Caco-2 (cell line): ENCODE measurements at regions of chr2 and their contacts with region 1.

Region 1: GRCh38 chr2:140416577-140416976 is 1636.4 kb upstream of the NXPH2 start:
- DNase-seq: no peak
- H3K4me3 ChIP-seq: no peak overlapping the region
- H3K4me3 Mint-ChIP-seq: no peak overlapping the region
- H3K27ac Mint-ChIP-seq: no peak overlapping the region
- H3K4me1 ChIP-seq: peaks cover 22% of the 10 kb centered on the region
- H3K4me1 Mint-ChIP-seq: peaks cover 9% of the 10 kb centered on the region
- H3K27me3 ChIP-seq: no peaks in the 10 kb centered on the region
- H3K27me3 Mint-ChIP-seq: no peaks in the 10 kb centered on the region
- CTCF ChIP-seq: no peak

Region 2: DNA sequence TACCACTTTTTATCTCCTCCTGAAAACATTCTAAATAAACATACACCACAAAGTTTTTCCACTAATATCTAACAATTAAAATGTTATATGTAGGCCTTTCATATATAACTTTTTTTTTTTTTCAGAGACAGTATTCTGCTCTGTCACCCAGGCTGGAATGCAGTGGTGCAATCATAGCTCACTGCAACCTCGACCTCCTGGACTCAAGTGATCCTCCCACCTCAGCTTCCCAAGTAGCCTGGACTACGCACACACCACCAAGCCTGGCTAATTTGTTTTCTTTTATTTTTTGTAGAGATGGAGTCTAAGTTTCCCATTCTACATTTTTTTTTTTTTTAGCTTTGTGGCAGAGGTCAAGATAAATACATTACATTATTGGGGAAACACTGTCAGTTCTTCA is 23.8 kb before region 1 on chr2:
- CTCF ChIA-PET with region 1: no interaction called
- POLR2A ChIA-PET with region 1: no interaction called
- intact Hi-C with region 1: loop called (anchors 2 kb)
- DNase-seq: peak; percentile 51 to 64
- H3K4me3 ChIP-seq: no peak overlapping the region
- H3K4me3 Mint-ChIP-seq: no peak overlapping the region
- H3K27ac Mint-ChIP-seq: no peak overlapping the region
- H3K4me1 ChIP-seq: peaks cover 8% of the 10 kb centered on the region; the same call in 1 of the 2 replicates
- H3K4me1 Mint-ChIP-seq: peaks cover 12% of the 10 kb centered on the region
- H3K27me3 ChIP-seq: no peaks in the 10 kb centered on the region
- H3K27me3 Mint-ChIP-seq: no peaks in the 10 kb centered on the region
- CTCF ChIP-seq: no peak

Region 3: DNA sequence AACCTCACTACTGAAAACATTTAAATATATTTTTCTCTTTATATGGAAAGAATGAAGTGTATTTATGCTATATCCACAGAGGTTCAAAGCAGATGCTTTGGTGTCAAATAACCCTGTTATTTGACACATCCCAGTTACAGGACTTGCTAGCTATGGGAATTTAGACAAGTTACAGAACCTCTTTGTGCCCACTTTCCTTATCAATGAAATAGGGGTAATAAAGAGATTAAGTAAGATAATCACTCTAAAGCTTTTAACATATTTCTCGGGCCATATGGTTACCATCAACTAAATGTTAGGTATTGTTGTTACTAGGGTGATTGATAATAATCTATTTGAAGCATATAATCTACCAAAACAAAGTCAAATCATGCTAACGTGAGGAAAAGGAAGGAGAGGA is 24.2 kb after region 1 on chr2:
- CTCF ChIA-PET with region 1: no interaction called
- POLR2A ChIA-PET with region 1: no interaction called
- intact Hi-C with region 1: loop called (anchors 1 kb)
- DNase-seq: no peak
- H3K4me3 ChIP-seq: no peak overlapping the region
- H3K4me3 Mint-ChIP-seq: no peak overlapping the region
- H3K27ac Mint-ChIP-seq: no peak overlapping the region
- H3K4me1 ChIP-seq: peaks cover 11% of the 10 kb centered on the region; the same call in 1 of the 2 replicates
- H3K4me1 Mint-ChIP-seq: peaks cover 13% of the 10 kb centered on the region
- H3K27me3 ChIP-seq: no peaks in the 10 kb centered on the region
- H3K27me3 Mint-ChIP-seq: peaks cover 4% of the 10 kb centered on the region
- CTCF ChIP-seq: no peak